ENCODE measurements at regions of chr3 and their contacts with region 1.

Region 1: GRCh38 chr3:114383875-114384557 is 90.2 kb downstream of the TIGIT start:
- DNase-seq: peak; percentile 83 to 88 (median 86)
- ATAC-seq: peak; percentile 73 to 89 (median 86)
- H3K4me3 ChIP-seq: peak overlapping the region in 10 of 12 donors; percentile 31 to 57 (median 44)
- H3K27ac ChIP-seq: peak overlapping the region; percentile 50 to 83 (median 72)
- H3K4me1 ChIP-seq: peaks cover 3 to 53% (median 35%) of the 10 kb centered on the region in 12 donors
- H3K27me3 ChIP-seq: no peaks in the 10 kb centered on the region
- CTCF ChIP-seq: peak; percentile 89 to 98 (median 92)
- POLR2A ChIP-seq: no peak

Region 2: GRCh38 chr3:114418724-114419543 is 34.9 kb after region 1 on chr3:
- intact Hi-C with region 1: loop called in 9 of 10 experiments (anchors 1 to 5 kb)
- DNase-seq: no peak
- ATAC-seq: peak; percentile 53 to 84 (median 82)
- H3K4me3 ChIP-seq: peak overlapping the region in 6 of 12 donors; percentile 11 to 39 (median 34)
- H3K27ac ChIP-seq: peak overlapping the region in 11 of 12 donors; percentile 6 to 78 (median 52)
- H3K4me1 ChIP-seq: peaks cover 0 to 65% (median 29%) of the 10 kb centered on the region in 12 donors
- H3K27me3 ChIP-seq: no peaks in the 10 kb centered on the region
- CTCF ChIP-seq: peak; percentile 78 to 92 (median 89)
- POLR2A ChIP-seq: no peak

Region 3: DNA sequence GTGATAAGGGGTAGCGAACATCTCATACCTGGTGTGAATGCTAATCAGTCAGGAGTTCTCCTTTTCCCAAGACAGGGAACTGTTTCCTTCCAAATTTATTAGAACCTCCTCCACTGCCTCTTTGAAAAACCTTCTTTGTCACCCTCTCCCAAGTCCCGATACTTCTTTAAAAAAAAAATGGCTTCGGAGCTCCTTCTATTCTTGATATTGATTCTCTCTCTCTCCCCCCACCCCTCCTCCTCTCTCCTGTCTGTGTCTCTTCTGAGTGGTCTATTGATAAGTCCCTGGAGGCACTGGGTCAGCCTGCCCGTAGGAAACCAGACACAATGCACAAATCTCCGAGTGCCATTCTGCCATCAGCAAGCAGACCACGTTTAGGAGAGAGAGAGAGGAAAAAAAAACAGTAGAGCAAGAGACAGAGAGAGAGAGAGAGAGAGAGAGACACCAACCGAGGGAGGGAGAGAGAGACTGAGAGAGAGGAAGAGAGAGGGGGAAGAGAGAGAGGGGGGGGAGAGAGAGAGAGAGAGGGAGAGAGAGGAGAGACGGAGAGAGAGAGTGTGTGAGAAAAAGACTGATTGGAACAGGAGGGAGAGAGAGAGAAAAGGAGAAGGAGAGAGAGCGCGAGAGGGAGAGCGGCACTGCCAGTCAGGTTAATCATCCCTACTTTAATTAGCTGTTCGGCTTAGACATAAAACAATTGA is 70.7 kb after region 1 on chr3:
- intact Hi-C with region 1: loop called in 1 of 10 experiments (anchors 5 kb)
- DNase-seq: peak in 2 of 5 donors; percentile 21 to 24
- ATAC-seq: peak; percentile 19 to 53 (median 50)
- H3K4me3 ChIP-seq: peak overlapping the region in 11 of 12 donors; percentile 32 to 66 (median 53)
- H3K27ac ChIP-seq: peak overlapping the region; percentile 53 to 87 (median 72)
- H3K4me1 ChIP-seq: peaks cover 10 to 79% (median 43%) of the 10 kb centered on the region in 12 donors
- H3K27me3 ChIP-seq: no peaks in the 10 kb centered on the region
- CTCF ChIP-seq: no peak
- POLR2A ChIP-seq: no peak

Region 4: GRCh38 chr3:114498779-114499370 is 114.9 kb after region 1 on chr3:
- intact Hi-C with region 1: no loop called
- DNase-seq: peak in 2 of 5 donors; percentile 24 to 64
- ATAC-seq: peak; percentile 63 to 81 (median 73)
- H3K4me3 ChIP-seq: no peak overlapping the region
- H3K27ac ChIP-seq: peak overlapping the region in 8 of 12 donors; percentile 11 to 53 (median 40)
- H3K4me1 ChIP-seq: peaks cover 0 to 73% (median 35%) of the 10 kb centered on the region in 12 donors
- H3K27me3 ChIP-seq: no peaks in the 10 kb centered on the region
- CTCF ChIP-seq: no peak
- POLR2A ChIP-seq: no peak

Region 5: DNA sequence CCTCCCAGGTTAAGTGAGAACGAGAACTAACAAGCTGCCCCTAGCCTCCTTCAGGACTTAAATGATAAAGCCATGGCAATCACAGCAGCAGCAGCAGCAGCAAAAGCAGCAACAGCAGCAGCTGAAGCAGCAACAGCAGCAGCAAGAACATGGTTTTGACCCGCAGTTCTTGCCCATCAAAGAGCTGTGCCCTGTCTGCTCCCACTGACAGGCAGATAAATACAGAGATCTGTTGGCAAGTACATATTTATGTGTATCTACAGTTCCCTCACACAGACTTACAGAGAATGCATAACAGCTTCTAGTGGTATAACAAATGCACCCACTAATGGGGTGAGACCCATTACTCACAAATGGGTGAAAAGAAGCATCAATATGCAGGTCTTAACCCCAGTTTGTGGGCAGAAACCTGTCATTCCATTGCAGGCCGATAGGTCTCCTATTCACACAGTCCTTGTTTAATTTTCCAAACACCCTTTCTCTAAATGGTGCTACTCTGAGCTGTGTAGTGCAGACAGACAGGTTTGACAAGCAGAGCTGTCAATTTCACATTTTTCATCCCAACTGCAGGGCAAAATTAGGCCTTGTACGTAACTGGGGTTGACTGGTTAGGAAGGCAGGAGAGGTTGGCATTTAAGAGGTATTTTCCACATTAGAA is 226.1 kb after region 1 on chr3:
- intact Hi-C with region 1: loop called in 1 of 10 experiments (anchors 10 kb)
- DNase-seq: no peak
- ATAC-seq: peak in 3 of 4 donors; percentile 28 to 52 (median 29)
- H3K4me3 ChIP-seq: no peak overlapping the region
- H3K27ac ChIP-seq: peak overlapping the region in 3 of 12 donors; percentile 12 to 26 (median 25)
- H3K4me1 ChIP-seq: peaks cover 0 to 35% (median 20%) of the 10 kb centered on the region in 12 donors
- H3K27me3 ChIP-seq: no peaks in the 10 kb centered on the region
- CTCF ChIP-seq: no peak
- POLR2A ChIP-seq: no peak

Region 6: DNA sequence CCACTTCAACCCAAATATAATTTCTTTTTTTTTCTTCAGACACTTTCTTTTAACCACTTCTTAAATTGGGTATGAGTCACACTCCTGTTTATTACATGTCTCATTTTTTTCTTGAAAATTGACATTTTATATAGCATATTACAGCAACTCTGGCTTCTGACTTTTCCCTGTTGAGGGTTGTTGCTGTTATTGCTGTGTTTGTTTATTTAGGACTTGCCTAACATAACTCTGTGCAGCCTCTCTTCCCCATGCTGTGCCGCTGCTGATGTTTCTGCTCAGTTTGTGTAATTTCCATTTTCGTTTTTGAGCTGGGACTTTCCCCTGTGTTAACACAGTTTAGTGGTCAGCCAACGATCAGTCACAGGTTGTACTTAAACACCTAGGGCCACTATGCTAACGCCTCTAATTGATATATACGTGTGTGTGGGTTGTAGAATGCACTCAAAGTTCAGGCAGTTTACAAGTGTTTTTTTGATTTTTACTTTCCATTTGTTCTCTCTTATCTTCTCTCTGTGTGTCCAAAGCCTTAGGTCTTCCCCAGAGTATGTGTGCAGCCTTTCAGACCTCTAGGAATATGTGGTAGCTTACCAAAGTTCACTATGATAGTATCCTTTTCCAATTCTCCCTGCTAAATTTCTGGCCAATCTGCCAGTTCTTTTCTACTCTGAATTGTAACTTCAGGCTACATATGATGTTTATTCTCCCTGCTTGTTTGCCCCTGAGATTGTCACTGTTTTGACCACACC is 425.8 kb after region 1 on chr3:
- intact Hi-C with region 1: loop called in 1 of 10 experiments (anchors 10 kb)
- DNase-seq: no peak
- ATAC-seq: peak in 1 of 4 donors; percentile 20
- H3K4me3 ChIP-seq: no peak overlapping the region
- H3K27ac ChIP-seq: no peak overlapping the region
- H3K4me1 ChIP-seq: no peaks in the 10 kb centered on the region
- H3K27me3 ChIP-seq: no peaks in the 10 kb centered on the region
- CTCF ChIP-seq: no peak
- POLR2A ChIP-seq: no peak

Region 7: DNA sequence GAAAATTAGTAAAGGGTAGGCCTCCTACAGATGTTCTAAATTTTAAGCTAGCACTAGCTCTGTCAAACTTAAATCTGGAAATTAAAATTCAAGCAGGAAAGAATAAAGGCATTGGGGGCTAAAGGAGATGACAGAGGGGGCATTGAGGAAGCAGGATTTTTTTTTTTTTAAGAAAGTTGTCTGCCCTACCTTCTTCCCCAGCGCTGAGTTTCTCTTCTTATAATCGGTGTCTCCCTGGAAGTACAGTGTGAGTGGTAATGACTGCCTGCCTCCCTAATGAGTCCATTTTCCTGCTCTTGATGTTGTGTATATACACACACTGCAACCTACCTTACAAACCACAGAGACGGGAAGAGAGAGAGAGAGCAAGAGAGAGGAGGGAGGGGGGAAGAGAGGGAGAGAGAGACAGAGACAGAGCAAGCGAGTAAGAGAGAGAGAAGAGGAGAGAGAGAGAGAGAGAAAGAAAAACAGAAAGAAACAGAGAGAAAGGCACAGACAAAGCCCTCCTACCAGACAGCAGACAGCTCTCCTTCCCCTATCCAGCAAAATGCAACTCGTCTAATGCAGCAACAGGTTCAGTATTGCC is 716.1 kb after region 1 on chr3:
- intact Hi-C with region 1: loop called in 3 of 10 experiments (anchors 10 kb)
- DNase-seq: peak in 2 of 5 donors; percentile 26 to 31
- ATAC-seq: peak; percentile 83 to 95 (median 90)
- H3K4me3 ChIP-seq: peak overlapping the region; percentile 6 to 56 (median 50)
- H3K27ac ChIP-seq: peak overlapping the region; percentile 50 to 83 (median 69)
- H3K4me1 ChIP-seq: peaks cover 0 to 57% (median 29%) of the 10 kb centered on the region in 12 donors
- H3K27me3 ChIP-seq: no peaks in the 10 kb centered on the region
- CTCF ChIP-seq: peak in 1 of 12 donors; percentile 7
- POLR2A ChIP-seq: no peak

Region 8: GRCh38 chr3:115169808-115170207 is 785.8 kb after region 1 on chr3:
- intact Hi-C with region 1: loop called in 2 of 10 experiments (anchors 10 kb)
- DNase-seq: no peak
- ATAC-seq: no peak
- H3K4me3 ChIP-seq: no peak overlapping the region
- H3K27ac ChIP-seq: no peak overlapping the region
- H3K4me1 ChIP-seq: no peaks in the 10 kb centered on the region
- H3K27me3 ChIP-seq: no peaks in the 10 kb centered on the region
- CTCF ChIP-seq: peak; percentile 17 to 66 (median 46)
- POLR2A ChIP-seq: no peak